ENCODE measurements at regions of chr1 and their contacts with region 1.

Region 1: DNA sequence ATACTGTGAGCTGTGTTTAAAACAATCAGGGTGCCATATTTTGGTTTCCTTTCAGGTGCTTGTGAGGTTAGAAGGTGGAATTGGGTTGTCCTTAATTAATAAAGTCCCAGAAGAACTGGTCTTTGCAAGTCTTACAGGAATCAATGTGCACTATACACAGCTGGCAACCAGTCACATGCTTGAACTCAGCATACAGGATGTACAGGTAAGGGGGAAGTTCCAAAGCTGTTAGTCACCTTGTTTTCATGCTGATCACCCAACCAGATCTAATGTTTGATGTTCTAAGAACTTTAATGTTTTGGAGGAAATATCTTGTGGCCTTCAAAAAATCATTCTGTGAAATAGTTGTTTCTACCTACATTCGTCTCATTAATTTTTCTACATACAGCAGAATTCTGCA is 156.3 kb downstream of the VPS13D start:
- DNase-seq: no peak
- ATAC-seq: no peak
- H3K4me3 ChIP-seq: no peak overlapping the region
- H3K27ac ChIP-seq: no peak overlapping the region
- H3K4me1 ChIP-seq: no peaks in the 10 kb centered on the region
- H3K27me3 ChIP-seq: no peaks in the 10 kb centered on the region
- CTCF ChIP-seq: no peak
- EP300 ChIP-seq: no peak
- POLR2A ChIP-seq: no peak
- RAD21 ChIP-seq: no peak

Region 2: GRCh38 chr1:12220890-12221289 is 165.2 kb before region 1 on chr1:
- CTCF ChIA-PET with region 1: no interaction called
- POLR2A ChIA-PET with region 1: no interaction called
- RAD21 ChIA-PET with region 1: no interaction called
- SMC1A ChIA-PET with region 1: no interaction called
- in situ Hi-C with region 1: no loop called
- intact Hi-C with region 1: no loop called
- DNase-seq: no peak
- ATAC-seq: no peak
- H3K4me3 ChIP-seq: no peak overlapping the region
- H3K27ac ChIP-seq: no peak overlapping the region
- H3K4me1 ChIP-seq: no peaks in the 10 kb centered on the region
- H3K27me3 ChIP-seq: no peaks in the 10 kb centered on the region
- CTCF ChIP-seq: no peak
- EP300 ChIP-seq: no peak
- POLR2A ChIP-seq: no peak
- RAD21 ChIP-seq: no peak

Region 3: GRCh38 chr1:12434174-12434573 is 48.0 kb after region 1 on chr1:
- CTCF ChIA-PET with region 1: no interaction called
- POLR2A ChIA-PET with region 1: no interaction called
- RAD21 ChIA-PET with region 1: no interaction called
- SMC1A ChIA-PET with region 1: no interaction called
- in situ Hi-C with region 1: loop called (anchors 5 kb)
- intact Hi-C with region 1: no loop called
- DNase-seq: peak; percentile 73
- ATAC-seq: peak; percentile 53
- H3K4me3 ChIP-seq: no peak overlapping the region
- H3K27ac ChIP-seq: no peak overlapping the region
- H3K4me1 ChIP-seq: peaks cover 41% of the 10 kb centered on the region
- H3K27me3 ChIP-seq: no peaks in the 10 kb centered on the region
- CTCF ChIP-seq: no peak
- EP300 ChIP-seq: no peak; a peak in 2 of 4 replicates
- POLR2A ChIP-seq: no peak
- RAD21 ChIP-seq: no peak

Region 4: GRCh38 chr1:12464598-12465056 is 78.5 kb after region 1 on chr1:
- CTCF ChIA-PET with region 1: no interaction called
- POLR2A ChIA-PET with region 1: no interaction called
- RAD21 ChIA-PET with region 1: no interaction called
- SMC1A ChIA-PET with region 1: no interaction called
- in situ Hi-C with region 1: no loop called
- intact Hi-C with region 1: no loop called
- DNase-seq: no peak
- ATAC-seq: no peak
- H3K4me3 ChIP-seq: no peak overlapping the region
- H3K27ac ChIP-seq: no peak overlapping the region
- H3K4me1 ChIP-seq: no peaks in the 10 kb centered on the region
- H3K27me3 ChIP-seq: no peaks in the 10 kb centered on the region
- CTCF ChIP-seq: no peak
- EP300 ChIP-seq: no peak
- POLR2A ChIP-seq: no peak
- RAD21 ChIP-seq: no peak